Activated naive CD4-positive, alpha-beta T cell treated with anti-CD3 and anti-CD28 coated beads for 36 hours (primary cell): ENCODE measurements at regions of chr20 and their contacts with region 1.

Region 1: DNA sequence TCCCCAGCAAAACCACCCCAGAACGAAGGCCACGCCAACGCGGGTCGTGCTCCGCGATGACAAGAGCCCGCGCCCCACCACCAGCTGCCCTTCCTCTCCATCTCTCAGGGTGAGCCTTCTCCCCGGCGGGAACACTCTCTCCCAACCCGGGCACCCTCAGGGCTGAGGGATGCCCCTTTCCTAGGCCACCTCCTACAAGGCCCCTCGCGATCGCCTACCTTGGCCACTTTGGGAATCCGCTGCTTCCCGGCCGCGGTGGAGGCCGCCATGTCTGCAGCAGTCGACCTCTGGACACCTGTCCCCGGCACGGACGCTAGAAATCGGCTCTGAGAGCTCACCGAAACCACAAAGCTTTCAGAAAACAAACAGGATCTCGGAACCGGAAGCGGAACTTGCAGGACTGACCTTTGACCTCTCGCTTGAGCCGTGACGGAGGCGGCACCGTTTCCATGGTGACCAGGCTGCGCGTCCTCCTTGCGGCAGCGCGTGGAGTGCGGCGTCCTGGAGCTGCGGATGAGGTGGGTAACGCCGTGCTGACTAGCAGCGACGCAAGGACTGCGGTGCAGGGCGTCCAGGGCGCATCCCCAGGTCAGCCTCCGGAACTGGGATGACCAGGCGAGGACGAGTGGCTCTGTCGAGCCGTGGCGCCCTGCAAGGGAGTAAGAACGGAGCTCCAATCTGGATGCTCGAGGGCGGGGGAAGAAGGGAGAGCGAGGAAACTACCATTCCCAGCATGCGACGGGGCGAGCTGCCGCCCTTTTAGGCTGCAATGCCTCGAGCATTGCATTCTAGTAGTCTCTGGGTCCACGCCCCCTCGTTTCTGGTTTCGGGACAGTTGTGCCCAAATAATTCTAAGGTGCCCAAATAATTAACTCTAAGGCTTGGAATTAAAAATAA is at the starts of genes CFAP61 and CRNKL1:
- DNase-seq: peak; percentile 97
- H3K4me3 Mint-ChIP-seq: peak within 1 kb of the TSS; percentile 97
- H3K27ac Mint-ChIP-seq: peak within 1 kb of the TSS; percentile 96
- H3K4me1 Mint-ChIP-seq: peaks cover 14% of the 10 kb centered on the region
- H3K27me3 Mint-ChIP-seq: peaks cover 5% of the 10 kb centered on the region
- total RNA-seq, gene CFAP61: not detected
- total RNA-seq, gene CRNKL1: 14.1 to 15.7 TPM

Region 2: GRCh38 chr20:20017001-20017843 is 35.1 kb before region 1 on chr20 and contains the start of gene NAA20:
- CTCF ChIA-PET with region 1: interaction called, 18 read pairs
- intact Hi-C with region 1: loop called (anchors 1 kb)
- DNase-seq: peak; percentile 93
- H3K4me3 Mint-ChIP-seq: peak within 1 kb of the TSS; percentile 88
- H3K27ac Mint-ChIP-seq: peak within 1 kb of the TSS; percentile 90
- H3K4me1 Mint-ChIP-seq: peaks cover 54% of the 10 kb centered on the region
- H3K27me3 Mint-ChIP-seq: no peaks in the 10 kb centered on the region
- total RNA-seq, gene NAA20: 59.5 to 65.5 TPM